Sigmoid colon (tissue), 7 donors: ENCODE measurements at regions of chr16 and their contacts with region 1.

Region 1: GRCh38 chr16:67399181-67399733 is 6.0 kb upstream of the TPPP3 start:
- DNase-seq: no peak
- H3K4me3 ChIP-seq: peak overlapping the region in 1 of 4 donors; percentile 22
- H3K27ac ChIP-seq: no peak overlapping the region
- H3K4me1 ChIP-seq: peaks cover 0 to 47% (median 36%) of the 10 kb centered on the region in 4 donors
- H3K27me3 ChIP-seq: peaks cover 0 to 28% (median 7%) of the 10 kb centered on the region in 3 donors
- CTCF ChIP-seq: peak; percentile 33 to 77 (median 52)
- EP300 ChIP-seq: no peak
- POLR2A ChIP-seq: no peak

Region 2: GRCh38 chr16:67236563-67237395 is 162.5 kb before region 1 on chr16:
- intact Hi-C with region 1: no loop called
- DNase-seq: peak; percentile 68
- H3K4me3 ChIP-seq: no peak overlapping the region
- H3K27ac ChIP-seq: no peak overlapping the region
- H3K4me1 ChIP-seq: peaks cover 0 to 17% (median 15%) of the 10 kb centered on the region in 4 donors
- H3K27me3 ChIP-seq: no peaks in the 10 kb centered on the region
- CTCF ChIP-seq: no peak
- EP300 ChIP-seq: no peak
- POLR2A ChIP-seq: no peak

Region 3: GRCh38 chr16:67279296-67280089 is 119.8 kb before region 1 on chr16 and contains the start of gene PLEKHG4:
- intact Hi-C with region 1: loop called (anchors 5 kb)
- DNase-seq: peak; percentile 83
- H3K4me3 ChIP-seq: peak within 1 kb of the TSS; percentile 36 to 67 (median 50)
- H3K27ac ChIP-seq: peak within 1 kb of the TSS; percentile 25 to 70 (median 50)
- H3K4me1 ChIP-seq: peaks cover 0 to 31% (median 12%) of the 10 kb centered on the region in 4 donors
- H3K27me3 ChIP-seq: peaks cover 0 to 5% (median 5%) of the 10 kb centered on the region in 3 donors
- CTCF ChIP-seq: peak in 2 of 4 experiments; percentile 16 to 64
- EP300 ChIP-seq: no peak
- POLR2A ChIP-seq: no peak
- total RNA-seq, gene PLEKHG4: 1.4 to 6.2 (median 3.7) TPM

Region 4: GRCh38 chr16:69057400-69058378 is 1658.4 kb after region 1 on chr16:
- intact Hi-C with region 1: no loop called
- DNase-seq: peak; percentile 62
- H3K4me3 ChIP-seq: no peak overlapping the region
- H3K27ac ChIP-seq: peak overlapping the region; percentile 52 to 76 (median 66)
- H3K4me1 ChIP-seq: peaks cover 0 to 20% (median 15%) of the 10 kb centered on the region in 4 donors
- H3K27me3 ChIP-seq: no peaks in the 10 kb centered on the region
- CTCF ChIP-seq: no peak
- EP300 ChIP-seq: no peak
- POLR2A ChIP-seq: no peak